ENCODE measurements at regions of chrX and their contacts with region 1.

Region 1: DNA sequence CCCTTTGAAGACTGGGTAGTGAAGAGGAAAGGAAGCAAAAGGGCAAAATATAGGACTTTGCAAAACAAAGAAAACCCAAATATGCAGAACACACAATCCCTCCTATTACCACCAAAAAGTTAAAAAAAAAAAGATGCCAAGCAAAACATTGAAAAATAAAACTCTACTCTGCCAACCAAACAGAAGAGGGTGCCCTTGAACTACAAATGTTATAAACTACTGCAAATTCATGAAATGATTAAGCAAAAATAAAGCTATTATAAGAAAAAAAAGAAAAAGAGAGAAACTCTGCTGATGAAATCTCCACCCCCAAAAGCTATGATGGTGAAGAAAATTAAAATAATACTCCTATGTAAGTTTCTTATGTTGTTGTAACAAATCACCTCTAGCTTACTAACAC is 168.5 kb upstream of the STK26 start:
- ATAC-seq: peak in 1 of 8 experiments; percentile 19
- H3K4me3 ChIP-seq: no peak overlapping the region
- H3K27ac ChIP-seq: no peak overlapping the region
- H3K4me1 ChIP-seq: no peaks in the 10 kb centered on the region

Region 2: DNA sequence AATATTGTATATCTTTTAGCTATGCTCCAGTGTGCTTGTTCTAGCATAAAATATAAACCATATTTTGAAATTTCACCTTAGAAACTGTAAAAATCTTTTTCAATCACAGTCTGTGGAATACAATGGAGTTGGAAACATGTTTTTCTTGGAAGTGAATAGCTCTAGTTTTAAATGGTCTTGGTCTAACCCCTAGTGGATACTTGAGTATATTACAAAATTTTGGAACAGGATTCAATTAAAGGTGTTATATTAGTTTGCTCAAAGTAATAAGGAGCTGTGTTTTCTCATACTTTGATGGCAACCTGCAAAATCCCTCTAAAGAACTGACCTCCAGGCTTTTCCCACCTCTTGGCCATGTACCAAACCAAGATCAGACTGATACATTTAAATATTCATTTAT is 216.7 kb after region 1 on chrX:
- in situ Hi-C with region 1: loop called in 1 of 9 experiments (anchors 25 kb)
- ATAC-seq: peak in 3 of 8 experiments; percentile 45 to 56 (median 45)
- H3K4me3 ChIP-seq: no peak overlapping the region
- H3K27ac ChIP-seq: no peak overlapping the region
- H3K4me1 ChIP-seq: no peaks in the 10 kb centered on the region